Heart left ventricle (tissue), 16 donors: ENCODE measurements at regions of chr6 and their contacts with region 1.

Region 1: GRCh38 chr6:138422861-138423260 is 18.8 kb downstream of the HEBP2 start:
- DNase-seq: no peak
- ATAC-seq: no peak
- H3K4me3 ChIP-seq: no peak overlapping the region
- H3K27ac ChIP-seq: peak overlapping the region in 4 of 12 donors; percentile 5 to 30 (median 16)
- H3K4me1 ChIP-seq: peaks cover 0 to 23% (median 5%) of the 10 kb centered on the region in 12 donors
- H3K27me3 ChIP-seq: no peaks in the 10 kb centered on the region
- CTCF ChIP-seq: no peak
- POLR2A ChIP-seq: no peak

Region 2: DNA sequence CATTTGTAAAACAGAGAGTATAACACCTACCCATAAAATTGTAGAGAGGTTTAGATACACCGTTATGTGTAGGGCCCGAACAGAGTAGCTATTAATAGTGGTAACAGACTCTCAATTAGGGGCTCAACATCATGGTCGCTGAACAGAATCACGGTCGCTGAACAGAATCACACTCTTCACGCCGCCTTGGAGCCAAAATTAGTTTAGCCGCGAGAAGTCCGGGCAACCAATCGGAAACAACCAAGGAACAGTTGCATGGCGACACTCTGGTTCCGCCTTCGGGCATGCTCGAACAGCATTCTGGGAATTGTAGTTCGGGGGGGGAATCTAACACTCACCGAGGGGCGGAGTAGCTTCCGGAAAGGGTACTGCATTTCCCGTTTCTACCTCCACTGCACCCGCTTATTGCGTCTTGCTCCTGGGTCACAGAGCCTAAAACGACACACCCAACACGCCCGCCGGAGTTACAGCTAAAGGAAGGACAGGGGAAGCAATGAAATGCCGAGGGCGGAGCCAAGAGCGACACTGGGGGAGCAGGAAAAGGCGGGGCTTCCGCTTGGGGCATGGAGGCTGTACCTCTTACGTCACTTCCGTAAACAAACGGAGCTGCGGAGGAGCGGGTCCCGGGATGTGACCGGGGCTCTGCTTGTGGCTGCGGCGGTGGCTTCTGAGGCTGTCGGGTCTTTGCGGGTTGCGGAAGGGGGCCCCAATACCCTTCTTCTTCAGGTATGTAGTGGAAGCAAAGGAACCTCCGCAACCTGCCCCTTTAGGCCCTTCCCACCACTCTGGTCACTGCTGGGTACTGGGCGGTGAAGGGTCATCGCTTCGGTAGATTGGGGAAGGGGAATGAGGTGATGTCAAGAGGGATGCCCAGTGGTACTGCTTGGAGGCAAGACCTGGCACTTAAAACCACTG is 350.6 kb after region 1 on chr6 and contains the start of gene CCDC28A:
- intact Hi-C with region 1: loop called in 9 of 10 experiments (anchors 5 to 10 kb)
- DNase-seq: peak; percentile 93 to 97 (median 95)
- ATAC-seq: peak; percentile 94 to 97 (median 97)
- H3K4me3 ChIP-seq: peak within 1 kb of the TSS; percentile 64 to 92 (median 82)
- H3K27ac ChIP-seq: peak within 1 kb of the TSS; percentile 93 to 99 (median 98)
- H3K4me1 ChIP-seq: peaks cover 0 to 23% (median 14%) of the 10 kb centered on the region in 12 donors
- H3K27me3 ChIP-seq: no peaks in the 10 kb centered on the region
- CTCF ChIP-seq: peak in 1 of 12 donors; percentile 10
- POLR2A ChIP-seq: peak in 1 of 2 donors; percentile 60
- total RNA-seq, gene CCDC28A: 4.6 to 13.6 (median 7.8) TPM

Region 3: GRCh38 chr6:139016337-139017213 is 593.7 kb after region 1 on chr6:
- intact Hi-C with region 1: no loop called
- DNase-seq: no peak
- ATAC-seq: peak in 3 of 4 donors; percentile 26 to 54 (median 52)
- H3K4me3 ChIP-seq: no peak overlapping the region
- H3K27ac ChIP-seq: peak overlapping the region in 11 of 12 donors; percentile 11 to 65 (median 38)
- H3K4me1 ChIP-seq: peaks cover 0 to 29% (median 13%) of the 10 kb centered on the region in 12 donors
- H3K27me3 ChIP-seq: no peaks in the 10 kb centered on the region
- CTCF ChIP-seq: no peak
- POLR2A ChIP-seq: no peak